ENCODE measurements at regions of chr1 and their contacts with region 1.

Region 1: DNA sequence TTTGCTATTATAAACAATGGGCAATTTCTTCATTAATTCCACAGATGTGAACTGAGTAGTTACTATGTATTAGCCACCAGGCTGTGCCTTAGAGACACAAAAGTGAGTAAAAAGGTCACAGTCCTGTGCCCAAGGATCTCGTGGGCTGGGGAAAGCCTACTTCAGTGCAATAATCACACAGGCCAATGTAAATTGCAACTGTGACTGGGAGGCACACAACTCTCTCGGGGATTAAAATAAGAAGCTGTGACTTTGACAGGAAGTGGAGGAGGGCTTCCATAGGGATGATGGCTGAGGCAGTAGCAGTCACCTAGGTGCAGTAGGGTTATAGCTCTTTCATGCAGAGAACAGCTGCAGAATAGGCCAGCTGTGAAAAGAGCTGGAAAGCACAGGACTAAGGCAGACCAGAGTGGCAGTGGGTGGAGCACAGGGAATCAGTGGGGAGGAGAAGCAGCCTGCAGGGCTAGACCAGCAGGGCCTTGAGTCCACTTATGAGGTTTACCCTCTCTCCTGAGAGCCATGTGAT is 121.9 kb downstream of the MAB21L3 start:
- DNase-seq: no peak
- ATAC-seq: peak in 3 of 8 donors; percentile 34 to 57 (median 42)
- H3K4me3 ChIP-seq: no peak overlapping the region
- H3K27ac ChIP-seq: no peak overlapping the region
- H3K4me1 ChIP-seq: peaks cover 0 to 6% (median 0%) of the 10 kb centered on the region in 9 donors
- H3K27me3 ChIP-seq: no peaks in the 10 kb centered on the region
- CTCF ChIP-seq: peak in 5 of 9 donors; percentile 5 to 25 (median 16)

Region 2: DNA sequence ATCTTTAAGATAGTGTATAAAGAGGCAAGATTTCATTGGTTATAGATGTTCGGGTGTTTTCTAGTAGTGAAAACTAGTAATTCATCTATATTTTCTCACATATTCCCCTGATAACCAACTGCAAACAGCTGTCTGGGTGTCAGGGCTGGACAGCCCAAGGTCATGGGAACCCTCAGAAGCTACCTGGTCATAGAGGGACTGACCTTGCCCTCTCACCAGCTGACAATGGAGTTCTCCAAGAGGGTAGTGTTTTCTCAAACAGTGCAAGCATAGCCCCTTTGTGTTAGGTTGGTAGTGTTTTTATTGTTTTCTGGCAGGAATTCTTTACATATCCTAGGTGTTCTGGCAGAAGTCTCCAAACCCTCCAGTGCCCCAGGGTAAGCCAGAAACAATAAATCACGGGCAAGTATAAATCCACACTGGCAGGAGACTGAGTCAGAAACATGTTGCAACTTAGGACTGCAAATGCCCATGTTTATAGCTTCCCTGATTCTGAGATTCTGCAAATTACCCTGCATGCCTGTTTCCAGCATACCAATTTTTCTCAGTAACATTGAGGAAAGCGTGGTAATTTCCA is 57.1 kb after region 1 on chr1:
- intact Hi-C with region 1: loop called in 1 of 10 experiments (anchors 10 kb)
- DNase-seq: no peak
- ATAC-seq: no peak
- H3K4me3 ChIP-seq: no peak overlapping the region
- H3K27ac ChIP-seq: no peak overlapping the region
- H3K4me1 ChIP-seq: no peaks in the 10 kb centered on the region
- H3K27me3 ChIP-seq: peaks cover 0 to 2% (median 0%) of the 10 kb centered on the region in 7 donors
- CTCF ChIP-seq: no peak

Region 3: DNA sequence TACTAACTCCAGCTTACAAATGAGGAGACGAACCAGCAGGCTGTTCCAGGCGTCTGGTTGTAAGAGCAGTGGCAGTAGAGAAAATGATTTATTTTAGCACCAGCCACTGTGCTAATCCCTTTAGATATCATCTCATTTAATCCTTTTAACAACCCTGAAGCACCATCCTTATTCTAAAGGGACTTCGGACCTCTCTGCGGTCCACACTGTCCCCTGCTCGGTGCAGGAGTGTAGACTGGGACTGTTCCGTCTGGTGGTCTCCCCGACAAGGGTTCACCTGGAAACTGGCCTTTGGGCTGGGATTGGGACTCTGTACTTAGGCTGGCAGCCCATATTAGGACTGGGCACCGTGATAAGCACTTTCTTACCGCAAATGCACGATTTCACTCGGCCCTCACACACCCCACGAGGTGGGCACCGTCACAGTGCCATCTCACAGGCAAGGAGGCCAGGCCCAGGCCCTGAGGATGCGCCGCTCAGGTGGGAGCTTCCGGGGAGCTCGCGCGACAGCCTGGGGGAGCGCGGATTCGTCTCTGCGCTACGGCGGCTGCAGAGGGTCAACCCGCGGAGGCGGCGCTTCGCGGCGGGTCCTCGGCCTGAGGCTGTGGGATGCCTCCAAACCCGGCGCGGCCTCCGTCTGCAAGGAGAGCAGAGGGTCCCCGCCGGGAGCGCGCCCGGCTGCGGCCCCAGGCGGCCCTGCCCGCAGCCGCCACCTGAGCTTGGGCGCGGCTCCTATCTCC is 185.2 kb after region 1 on chr1:
- intact Hi-C with region 1: no loop called
- DNase-seq: peak; percentile 83 to 87
- ATAC-seq: peak; percentile 68 to 87 (median 78)
- H3K4me3 ChIP-seq: peak overlapping the region; percentile 57 to 90 (median 82)
- H3K27ac ChIP-seq: peak overlapping the region; percentile 28 to 92 (median 88)
- H3K4me1 ChIP-seq: peaks cover 5 to 47% (median 28%) of the 10 kb centered on the region in 9 donors
- H3K27me3 ChIP-seq: no peaks in the 10 kb centered on the region
- CTCF ChIP-seq: peak in 2 of 9 donors; percentile 5 to 11

Measured in heart right ventricle (tissue), 16 donors.